ENCODE measurements at regions of chr1 and their contacts with region 1.

Region 1: DNA sequence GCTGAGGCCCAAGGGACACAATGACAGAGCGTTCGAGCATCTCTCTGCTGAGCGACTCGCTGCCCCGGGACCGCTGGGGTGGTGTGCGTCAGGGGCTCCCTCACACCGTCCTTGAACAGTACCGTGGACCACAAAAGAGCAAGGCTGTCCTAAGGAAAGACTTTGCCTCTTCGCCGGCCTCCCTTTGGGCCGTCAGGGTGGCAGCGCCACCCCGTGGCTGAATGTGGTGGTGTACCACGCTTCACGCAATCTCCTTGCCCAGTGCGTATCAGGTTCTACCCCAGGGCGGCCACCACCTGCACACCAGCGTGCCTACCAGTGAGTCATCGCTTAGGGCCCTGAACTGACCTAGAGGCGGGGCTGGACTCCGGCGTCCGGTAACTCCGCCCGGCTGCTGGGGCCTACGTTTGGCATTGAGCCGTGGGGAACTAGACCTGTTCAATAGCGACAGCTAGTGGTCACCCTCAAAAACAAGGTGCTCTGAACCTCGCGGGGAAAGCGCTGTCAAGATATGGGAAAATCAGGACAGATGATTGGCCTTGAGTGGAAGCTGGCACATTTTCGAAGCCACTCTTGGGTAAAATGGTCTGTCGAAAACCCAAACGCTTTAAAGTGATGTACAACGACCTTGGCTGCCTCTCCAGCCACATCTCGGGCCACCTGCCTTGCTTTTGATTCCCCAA is 8.1 kb upstream of the TRAF3IP3 start:
- DNase-seq: peak; percentile 87 to 91
- ATAC-seq: peak; percentile 95 to 99 (median 98)
- H3K4me3 ChIP-seq: peak overlapping the region in 7 of 10 donors; percentile 15 to 44 (median 41)
- H3K27ac ChIP-seq: peak overlapping the region in 9 of 10 donors; percentile 46 to 69 (median 55)
- H3K4me1 ChIP-seq: peaks cover under 1 to 49% (median 30%) of the 10 kb centered on the region in 9 donors
- H3K27me3 ChIP-seq: no peaks in the 10 kb centered on the region
- CTCF ChIP-seq: peak; percentile 77 to 96 (median 92)

Region 2: DNA sequence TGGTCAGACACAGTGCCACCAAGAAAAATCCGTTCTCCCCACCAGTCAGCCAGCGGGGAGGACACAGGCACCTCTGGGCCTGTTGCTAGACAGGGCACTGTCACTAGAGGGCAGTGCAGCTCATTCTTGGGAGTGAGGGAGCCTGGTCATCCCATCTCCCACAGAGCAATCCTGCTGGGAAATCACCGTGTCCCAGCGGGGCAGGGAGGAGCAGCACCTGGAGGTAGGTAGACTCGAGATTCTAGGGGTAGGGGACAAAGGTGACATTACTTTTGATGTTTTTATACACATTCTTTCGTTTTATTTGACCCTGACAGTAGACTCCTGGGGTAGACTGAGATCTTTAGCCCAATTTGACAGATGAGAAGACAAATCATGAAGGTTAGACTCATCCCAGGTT is 170.9 kb before region 1 on chr1:
- intact Hi-C with region 1: loop called in 8 of 10 experiments (anchors 2 to 10 kb)
- DNase-seq: peak; percentile 81 to 84
- ATAC-seq: peak; percentile 90 to 97 (median 94)
- H3K4me3 ChIP-seq: no peak overlapping the region
- H3K27ac ChIP-seq: no peak overlapping the region
- H3K4me1 ChIP-seq: peaks cover 0 to 5% (median 0%) of the 10 kb centered on the region in 9 donors
- H3K27me3 ChIP-seq: peaks cover 0 to 39% (median 18%) of the 10 kb centered on the region in 7 donors
- CTCF ChIP-seq: peak; percentile 81 to 98 (median 96)

Region 3: DNA sequence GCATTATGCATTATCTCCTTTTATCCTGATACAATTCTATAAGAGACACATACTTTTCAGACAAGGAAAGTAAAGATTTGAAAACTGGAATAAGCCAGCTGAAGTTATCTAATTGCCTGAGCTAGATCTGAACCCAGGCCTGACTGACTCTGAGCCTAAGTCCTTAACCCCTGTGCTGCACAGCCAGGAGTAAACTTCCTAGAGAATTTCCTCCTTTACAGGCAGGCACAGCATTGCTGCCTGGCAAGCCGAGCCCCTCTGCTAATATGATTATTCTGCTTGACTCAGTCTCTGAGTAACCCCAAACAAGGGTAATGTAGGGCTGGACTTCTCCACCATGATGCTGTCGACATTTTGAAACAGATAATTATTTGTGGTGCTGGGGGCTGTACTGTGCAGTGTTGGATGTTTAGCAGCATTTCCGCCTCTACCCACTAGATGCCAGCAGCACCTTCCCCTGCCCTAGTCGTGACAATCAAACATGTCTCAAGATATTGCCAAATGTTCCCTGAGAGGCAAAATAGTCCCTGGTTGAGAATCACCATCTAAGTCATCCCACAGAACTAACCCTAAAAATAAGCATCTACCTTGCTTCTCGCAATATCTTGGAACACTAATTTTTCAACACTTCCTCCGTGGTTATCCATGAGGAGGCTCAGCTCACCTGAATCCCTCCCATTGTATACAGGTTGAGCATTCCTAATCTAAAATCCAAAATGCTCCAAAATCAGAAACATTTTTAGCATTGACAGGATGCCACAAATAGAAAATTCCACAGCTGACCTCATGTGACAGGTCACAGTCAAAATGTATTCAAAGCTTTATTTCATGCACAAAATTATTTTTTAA is 145.7 kb before region 1 on chr1:
- intact Hi-C with region 1: loop called in 1 of 10 experiments (anchors 5 kb)
- DNase-seq: peak in 1 of 2 donors; percentile 20
- ATAC-seq: peak in 7 of 8 donors; percentile 59 to 93 (median 76)
- H3K4me3 ChIP-seq: no peak overlapping the region
- H3K27ac ChIP-seq: no peak overlapping the region
- H3K4me1 ChIP-seq: peaks cover 0 to 8% (median 0%) of the 10 kb centered on the region in 9 donors
- H3K27me3 ChIP-seq: peaks cover 0 to 15% (median 0%) of the 10 kb centered on the region in 7 donors
- CTCF ChIP-seq: peak; percentile 18 to 79 (median 70)

Region 4: DNA sequence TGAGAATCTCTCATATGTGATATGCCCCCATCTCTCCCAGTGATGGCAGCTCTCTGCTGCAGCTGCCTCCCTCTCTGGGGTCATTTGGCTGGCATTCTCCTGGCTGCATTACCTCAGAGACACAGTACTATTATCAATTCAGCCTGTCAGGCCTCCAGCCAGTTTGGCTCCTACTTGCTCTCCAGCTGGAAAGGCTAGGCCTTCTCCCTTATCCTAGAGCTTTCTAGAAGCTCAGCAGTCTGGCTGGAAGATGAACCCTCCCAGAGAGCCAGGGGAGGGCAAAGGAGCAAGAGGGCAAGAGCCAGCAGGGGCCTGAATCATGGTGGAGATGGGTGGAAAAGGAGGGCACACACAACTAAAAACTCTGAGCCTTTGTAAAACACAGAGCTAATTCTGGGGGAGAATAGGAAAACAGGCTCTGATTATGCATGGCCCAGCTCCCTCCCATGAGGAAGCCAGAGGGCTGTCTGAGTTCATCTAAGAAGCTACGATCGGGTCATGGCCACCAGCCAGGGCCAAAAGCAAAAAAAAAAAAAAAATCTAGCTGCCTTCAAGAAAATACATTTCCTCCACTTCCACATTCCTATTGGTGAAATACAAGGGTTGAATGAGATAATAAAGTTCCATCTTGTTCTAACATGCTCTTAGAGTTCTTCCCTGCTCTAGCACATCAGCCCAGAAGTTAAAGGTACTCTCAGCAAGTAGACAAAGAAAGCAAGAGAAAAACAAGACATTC is 104.3 kb before region 1 on chr1:
- intact Hi-C with region 1: loop called in 3 of 10 experiments (anchors 5 to 10 kb)
- DNase-seq: peak; percentile 71 to 88
- ATAC-seq: peak; percentile 44 to 86 (median 78)
- H3K4me3 ChIP-seq: no peak overlapping the region
- H3K27ac ChIP-seq: peak overlapping the region; percentile 5 to 98 (median 88)
- H3K4me1 ChIP-seq: peaks cover 36 to 79% (median 75%) of the 10 kb centered on the region in 9 donors
- H3K27me3 ChIP-seq: no peaks in the 10 kb centered on the region
- CTCF ChIP-seq: peak in 3 of 9 donors; percentile 25 to 39 (median 37)

Region 5: DNA sequence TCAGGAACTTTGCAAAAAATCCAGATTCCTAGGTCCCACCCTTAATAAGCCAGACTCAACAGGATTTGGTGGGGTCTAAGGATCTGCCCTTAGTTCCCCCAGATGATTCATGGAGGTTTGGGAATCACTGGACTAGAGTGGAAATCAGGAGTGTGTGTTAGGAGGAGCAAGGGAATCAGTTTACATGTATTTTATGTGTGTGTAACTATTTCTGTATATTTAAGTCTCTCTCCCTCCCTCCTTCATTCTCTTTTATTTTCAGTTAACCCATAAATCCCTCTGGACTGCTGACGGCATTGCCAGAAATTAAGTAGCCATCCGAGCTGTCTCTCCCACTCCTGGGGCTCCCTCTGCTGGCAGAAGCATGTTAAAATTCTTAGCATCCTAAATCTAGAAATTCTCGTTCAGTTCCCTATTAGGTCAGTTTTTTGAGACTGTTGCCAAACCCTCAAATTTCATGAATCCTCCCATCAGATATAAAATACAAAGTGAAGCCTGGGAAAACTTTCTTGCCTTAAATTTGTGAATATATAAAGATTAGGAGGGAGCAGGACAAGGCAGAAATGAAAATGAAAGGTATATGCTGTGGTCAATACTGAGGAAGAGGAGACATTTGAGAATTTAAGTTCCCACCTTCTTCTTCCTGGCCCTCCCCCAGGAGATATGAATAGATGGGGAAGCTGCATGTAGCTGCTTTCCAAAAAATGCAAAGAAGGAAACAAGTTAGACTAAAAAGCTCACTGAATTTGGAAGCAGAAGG is 54.8 kb before region 1 on chr1:
- intact Hi-C with region 1: loop called in 8 of 10 experiments (anchors 5 to 10 kb)
- DNase-seq: peak; percentile 60 to 86
- ATAC-seq: peak; percentile 46 to 79 (median 65)
- H3K4me3 ChIP-seq: no peak overlapping the region
- H3K27ac ChIP-seq: peak overlapping the region in 2 of 10 donors; percentile 5 to 69
- H3K4me1 ChIP-seq: peaks cover 0 to 36% (median 19%) of the 10 kb centered on the region in 9 donors
- H3K27me3 ChIP-seq: no peaks in the 10 kb centered on the region
- CTCF ChIP-seq: peak; percentile 64 to 94 (median 86)

Region 6: DNA sequence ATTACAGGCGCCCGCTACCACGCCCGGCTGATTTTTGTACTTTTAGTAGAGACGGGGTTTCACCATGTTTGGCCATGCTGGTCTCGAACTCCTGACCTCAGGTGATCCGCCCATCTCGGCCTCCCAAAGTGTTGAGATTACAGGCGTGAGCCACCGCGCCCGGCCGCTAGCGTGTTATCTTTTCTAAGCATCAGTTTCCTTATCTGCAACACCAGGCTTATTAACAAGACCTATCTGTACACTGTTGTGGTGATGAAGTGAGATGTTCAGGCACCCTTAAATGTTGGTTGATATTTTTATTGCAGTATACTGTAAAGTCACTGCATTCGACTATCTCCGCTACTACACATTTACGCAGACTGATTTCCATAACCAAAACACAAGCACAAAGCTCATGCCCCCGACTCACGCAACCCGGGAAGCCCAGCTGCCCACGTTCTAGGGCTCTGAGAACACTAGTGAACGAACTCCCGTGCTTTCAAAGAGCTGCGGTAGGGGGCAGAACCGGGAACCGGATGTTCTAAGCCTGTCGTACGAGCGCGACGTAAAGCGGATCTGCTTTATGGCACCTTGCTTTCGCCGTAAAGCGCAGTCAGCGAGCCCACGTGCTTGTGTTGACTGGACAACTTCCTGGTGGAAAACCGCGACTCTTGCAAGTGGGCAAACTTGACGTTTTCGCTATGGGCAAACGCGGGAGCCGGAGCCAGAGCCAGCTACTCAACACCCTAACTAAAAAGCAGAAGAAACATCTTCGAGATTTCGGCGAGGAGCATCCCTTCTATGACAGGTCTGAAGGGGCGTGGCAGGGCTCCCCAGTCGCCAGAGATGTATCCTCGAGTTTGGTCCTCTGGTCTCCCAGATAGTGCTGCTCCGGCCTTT is 79.9 kb after region 1 on chr1 and contains the start of gene UTP25:
- intact Hi-C with region 1: loop called in 1 of 10 experiments (anchors 5 kb)
- DNase-seq: peak; percentile 90 to 95
- ATAC-seq: peak; percentile 87 to 95 (median 92)
- H3K4me3 ChIP-seq: peak within 1 kb of the TSS; percentile 67 to 94 (median 72)
- H3K27ac ChIP-seq: peak within 1 kb of the TSS in 9 of 10 donors; percentile 57 to 90 (median 75)
- H3K4me1 ChIP-seq: peaks cover 0 to 35% (median 20%) of the 10 kb centered on the region in 9 donors
- H3K27me3 ChIP-seq: no peaks in the 10 kb centered on the region
- CTCF ChIP-seq: peak; percentile 56 to 86 (median 73)
- total RNA-seq, gene UTP25: 2.3 to 4.2 (median 3.4) TPM